ENCODE measurements at regions of chr17 and their contacts with region 1.

Region 1: DNA sequence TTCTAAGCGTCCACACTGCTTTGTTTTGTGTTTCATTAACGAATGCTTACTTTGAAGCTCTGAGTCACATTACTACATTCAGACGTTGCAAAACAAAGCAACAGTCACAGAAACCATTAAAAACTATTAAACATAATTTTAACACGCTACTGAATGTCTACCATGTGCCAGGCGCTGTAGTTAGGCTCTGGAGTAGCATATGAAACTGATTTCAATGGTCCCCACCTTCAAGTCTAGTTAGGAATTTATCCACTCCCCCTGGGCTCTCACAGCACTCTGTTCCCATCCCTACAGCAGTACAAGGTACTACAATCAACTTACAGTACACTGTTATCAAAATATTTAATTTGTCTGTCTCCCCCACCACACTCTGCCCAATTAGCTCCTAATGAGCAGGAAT is 631 bp downstream of the UTP6 start:
- DNase-seq: no peak
- H3K4me3 Mint-ChIP-seq: no peak overlapping the region
- H3K27ac Mint-ChIP-seq: no peak overlapping the region
- H3K4me1 Mint-ChIP-seq: peaks cover 18% of the 10 kb centered on the region
- H3K27me3 Mint-ChIP-seq: no peaks in the 10 kb centered on the region

Region 2: DNA sequence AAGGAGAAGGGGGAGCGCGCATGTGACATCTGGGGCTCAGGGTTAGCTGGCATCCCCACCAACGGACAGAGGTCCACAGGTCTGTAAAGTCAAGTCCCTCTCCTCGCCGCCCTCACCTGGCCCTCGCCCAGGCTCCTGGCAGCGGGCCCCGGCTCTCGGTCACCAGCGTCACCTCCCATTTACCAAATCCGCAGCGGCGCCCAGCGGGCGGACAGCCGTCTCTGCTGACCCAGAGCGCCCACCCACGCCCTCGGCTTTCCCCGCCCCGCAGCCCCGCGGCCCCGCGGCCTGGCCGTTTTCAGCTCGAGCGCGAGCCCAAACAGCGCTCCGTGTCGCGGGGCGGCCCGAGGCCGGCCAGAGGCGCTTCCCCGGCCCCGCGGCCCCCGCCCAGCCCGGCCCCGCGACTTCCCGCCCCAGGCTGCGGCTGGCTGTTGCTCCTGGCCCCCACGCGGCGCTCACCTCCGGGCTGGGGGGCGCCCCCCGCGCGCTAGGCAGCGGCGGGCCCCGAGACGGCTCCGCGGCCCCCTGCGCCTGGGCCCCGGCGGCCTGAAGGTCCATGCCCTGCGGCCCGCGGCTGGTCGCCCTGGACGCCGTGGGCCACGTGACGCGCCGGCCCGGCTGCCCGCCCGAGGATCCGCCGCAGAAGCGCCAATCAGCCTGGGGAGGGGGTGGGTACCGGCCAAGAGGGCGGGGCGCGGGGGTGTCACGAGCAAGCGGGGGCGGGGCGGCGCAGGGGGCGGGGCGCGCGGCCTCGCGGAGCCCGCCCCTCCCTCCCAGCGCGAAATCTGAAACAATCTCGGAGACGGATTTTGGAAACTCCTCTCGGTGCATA is 42.0 kb before region 1 on chr17 and contains the start of gene COPRS:
- CTCF ChIA-PET with region 1: interaction called, 3 read pairs
- POLR2A ChIA-PET with region 1: interaction called, 3 read pairs
- intact Hi-C with region 1: loop called (anchors 1 kb)
- DNase-seq: peak; percentile 87
- H3K4me3 Mint-ChIP-seq: peak within 1 kb of the TSS; percentile 86
- H3K27ac Mint-ChIP-seq: peak within 1 kb of the TSS; percentile 73
- H3K4me1 Mint-ChIP-seq: peaks cover 18% of the 10 kb centered on the region
- H3K27me3 Mint-ChIP-seq: no peaks in the 10 kb centered on the region
- total RNA-seq, gene COPRS: 49.6 to 50.3 TPM

Region 3: GRCh38 chr17:31919802-31920525 is 19.1 kb after region 1 on chr17:
- CTCF ChIA-PET with region 1: no interaction called
- POLR2A ChIA-PET with region 1: no interaction called
- intact Hi-C with region 1: loop called (anchors 2 kb)
- DNase-seq: peak; percentile 43
- H3K4me3 Mint-ChIP-seq: peak overlapping the region; percentile 30
- H3K27ac Mint-ChIP-seq: peak overlapping the region; percentile 74
- H3K4me1 Mint-ChIP-seq: peaks cover 17% of the 10 kb centered on the region
- H3K27me3 Mint-ChIP-seq: peaks cover 21% of the 10 kb centered on the region

Region 4: DNA sequence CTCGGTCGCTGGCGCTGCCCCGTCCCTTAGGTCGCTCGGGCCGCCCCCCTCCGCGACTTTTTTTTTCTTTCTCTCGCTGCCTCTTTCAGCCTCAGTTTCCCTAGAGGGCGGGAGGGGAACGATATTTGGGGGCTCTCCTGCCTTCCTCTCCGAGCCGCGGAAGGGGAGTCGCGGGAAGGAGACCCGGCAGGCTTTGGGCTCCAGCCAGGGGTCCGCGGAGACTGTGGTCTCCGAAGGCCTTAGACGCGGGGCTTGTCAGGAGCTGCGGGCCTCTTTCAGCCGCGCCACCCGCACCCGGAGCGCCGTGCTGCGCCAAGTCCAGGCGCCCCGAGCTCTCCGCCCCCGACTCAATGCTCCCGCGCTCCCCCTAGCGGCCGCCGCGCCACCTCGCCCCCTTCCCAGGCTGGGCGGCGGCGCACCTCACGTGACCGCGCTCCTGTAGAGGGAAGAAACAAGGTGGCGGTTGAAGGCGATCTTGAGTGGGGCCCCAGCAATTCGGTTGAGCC is 106.1 kb after region 1 on chr17 and contains the start of gene LRRC37B:
- CTCF ChIA-PET with region 1: interaction called, 5 read pairs
- POLR2A ChIA-PET with region 1: no interaction called
- intact Hi-C with region 1: loop called (anchors 1 kb)
- DNase-seq: peak; percentile 94
- H3K4me3 Mint-ChIP-seq: peak within 1 kb of the TSS; percentile 81
- H3K27ac Mint-ChIP-seq: peak within 1 kb of the TSS; percentile 68
- H3K4me1 Mint-ChIP-seq: peaks cover 36% of the 10 kb centered on the region
- H3K27me3 Mint-ChIP-seq: no peaks in the 10 kb centered on the region
- total RNA-seq, gene LRRC37B: 16.4 to 17.2 TPM

Region 5: DNA sequence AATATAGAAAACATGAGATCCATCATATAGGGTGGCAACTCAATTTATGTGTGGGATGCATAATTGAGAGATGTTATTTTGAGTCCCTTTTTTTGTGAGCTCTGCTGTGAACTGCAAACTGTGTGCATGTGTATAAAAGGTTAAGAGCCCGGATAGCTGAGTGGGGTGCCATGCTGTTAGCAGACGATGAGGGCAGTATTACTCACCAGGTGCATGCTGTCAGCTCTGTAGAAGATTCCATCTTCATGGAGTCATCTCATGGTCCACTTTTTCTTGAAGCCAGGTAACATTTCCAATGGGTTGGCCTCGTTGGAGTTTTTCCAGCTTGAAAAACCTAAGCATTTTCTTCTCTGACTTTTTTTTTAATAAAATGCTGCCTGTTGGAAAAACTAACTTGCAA is 321.7 kb after region 1 on chr17:
- CTCF ChIA-PET with region 1: no interaction called
- POLR2A ChIA-PET with region 1: no interaction called
- intact Hi-C with region 1: loop called (anchors 5 kb)
- DNase-seq: no peak
- H3K4me3 Mint-ChIP-seq: no peak overlapping the region
- H3K27ac Mint-ChIP-seq: no peak overlapping the region
- H3K4me1 Mint-ChIP-seq: peaks cover 36% of the 10 kb centered on the region
- H3K27me3 Mint-ChIP-seq: no peaks in the 10 kb centered on the region

Measured in activated CD4-positive, alpha-beta memory T cell treated with anti-CD3 and anti-CD28 coated beads for 36 hours (primary cell).